H1 (cell line): ENCODE measurements at regions of chr2 and their contacts with region 1.

Region 1: DNA sequence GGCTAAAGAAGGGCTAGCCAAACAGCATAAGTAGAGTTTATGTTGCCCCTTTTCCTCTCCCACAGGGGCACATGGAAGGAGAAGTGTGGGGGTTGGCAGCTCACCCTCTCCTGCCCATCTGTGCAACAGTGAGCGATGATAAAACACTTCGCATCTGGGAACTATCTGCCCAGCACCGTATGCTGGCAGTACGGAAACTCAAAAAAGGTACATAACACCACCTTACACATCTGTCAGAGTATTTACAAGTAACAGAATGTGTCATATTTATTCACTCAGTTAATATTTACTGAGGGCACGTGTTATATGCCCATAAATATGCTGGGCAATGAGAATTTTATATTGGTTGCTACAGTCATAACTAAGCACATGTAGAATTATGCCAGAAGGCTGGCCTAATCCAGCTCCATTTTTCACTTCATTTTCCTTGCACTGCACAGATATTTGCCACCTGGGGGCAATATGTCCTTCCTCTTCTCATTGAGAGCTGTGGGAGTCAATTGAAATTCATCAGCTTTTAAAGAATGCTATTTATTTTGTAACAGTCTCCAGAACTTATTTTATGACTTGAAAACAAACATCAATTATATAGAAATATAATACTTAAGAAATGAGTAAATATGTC is 150.6 kb downstream of the RTN4 start:
- DNase-seq: no peak
- H3K4me3 ChIP-seq: no peak overlapping the region
- H3K27ac ChIP-seq: no peak overlapping the region
- H3K4me1 ChIP-seq: no peaks in the 10 kb centered on the region
- H3K27me3 ChIP-seq: no peaks in the 10 kb centered on the region
- CTCF ChIP-seq: peak in 2 of 3 experiments; percentile 34; a peak in 2 of 4 replicates
- EP300 ChIP-seq: no peak
- POLR2A ChIP-seq: no peak
- RAD21 ChIP-seq: peak; percentile 66 to 74

Region 2: DNA sequence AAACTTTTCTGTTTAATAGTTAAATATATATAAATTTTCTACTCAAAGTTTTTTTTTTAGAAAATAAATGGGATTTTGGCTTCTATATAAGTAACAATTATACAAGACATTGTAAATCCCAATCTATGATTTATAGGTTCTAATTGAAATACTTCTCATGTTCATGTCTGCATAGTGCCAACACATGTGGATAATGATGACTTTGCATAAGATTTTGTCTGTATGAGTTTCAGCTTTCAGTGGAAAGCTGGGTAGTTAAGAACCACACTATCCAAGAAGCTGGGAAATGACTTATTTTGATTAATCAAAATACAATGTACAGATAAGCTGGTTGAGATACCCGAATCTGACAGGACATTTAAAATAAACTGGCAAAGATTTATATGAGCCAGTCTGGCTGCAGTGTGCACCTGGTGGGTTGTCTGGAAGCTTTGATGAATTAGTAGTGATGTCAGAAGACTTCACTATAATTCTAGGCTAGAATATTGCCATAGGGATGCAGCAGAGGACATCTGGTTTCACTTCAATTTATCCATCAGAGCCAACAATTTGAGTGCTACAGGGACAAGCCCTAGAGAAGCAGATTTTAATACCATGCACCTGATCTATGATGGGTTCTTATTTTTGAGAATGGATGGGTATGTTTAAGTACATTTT is 130.8 kb before region 1 on chr2:
- CTCF ChIA-PET with region 1: no interaction called
- POLR2A ChIA-PET with region 1: no interaction called
- DNase-seq: no peak
- H3K4me3 ChIP-seq: no peak overlapping the region
- H3K27ac ChIP-seq: no peak overlapping the region
- H3K4me1 ChIP-seq: no peaks in the 10 kb centered on the region
- H3K27me3 ChIP-seq: no peaks in the 10 kb centered on the region
- CTCF ChIP-seq: no peak
- EP300 ChIP-seq: no peak
- POLR2A ChIP-seq: no peak
- RAD21 ChIP-seq: no peak

Region 3: GRCh38 chr2:54866868-54867267 is 32.8 kb before region 1 on chr2:
- CTCF ChIA-PET with region 1: no interaction called
- POLR2A ChIA-PET with region 1: no interaction called
- DNase-seq: no peak
- H3K4me3 ChIP-seq: no peak overlapping the region
- H3K27ac ChIP-seq: no peak overlapping the region
- H3K4me1 ChIP-seq: peaks cover 0 to 2% (median 1%) of the 10 kb centered on the region in 4 experiments; a peak in 1 of 7 replicates
- H3K27me3 ChIP-seq: no peaks in the 10 kb centered on the region
- CTCF ChIP-seq: no peak
- EP300 ChIP-seq: no peak
- POLR2A ChIP-seq: no peak
- RAD21 ChIP-seq: no peak

Region 4: GRCh38 chr2:54889053-54889452 is 10.6 kb before region 1 on chr2:
- CTCF ChIA-PET with region 1: interaction called, 19 read pairs
- POLR2A ChIA-PET with region 1: interaction called, 4 read pairs
- DNase-seq: no peak
- H3K4me3 ChIP-seq: no peak overlapping the region
- H3K27ac ChIP-seq: no peak overlapping the region
- H3K4me1 ChIP-seq: no peaks in the 10 kb centered on the region
- H3K27me3 ChIP-seq: no peaks in the 10 kb centered on the region
- CTCF ChIP-seq: no peak
- EP300 ChIP-seq: no peak
- POLR2A ChIP-seq: no peak
- RAD21 ChIP-seq: no peak

Region 5: GRCh38 chr2:55175254-55176025 is 275.8 kb after region 1 on chr2:
- CTCF ChIA-PET with region 1: interaction called, 31 read pairs
- POLR2A ChIA-PET with region 1: no interaction called
- DNase-seq: no peak
- H3K4me3 ChIP-seq: no peak overlapping the region
- H3K27ac ChIP-seq: no peak overlapping the region
- H3K4me1 ChIP-seq: peaks cover 0 to 2% (median 1%) of the 10 kb centered on the region in 4 experiments; a peak in 2 of 7 replicates
- H3K27me3 ChIP-seq: peaks cover 0 to 1% (median 0%) of the 10 kb centered on the region in 4 experiments; a peak in 1 of 7 replicates
- CTCF ChIP-seq: peak in 2 of 3 experiments; percentile 39 to 58; a peak in 2 of 4 replicates
- EP300 ChIP-seq: no peak
- POLR2A ChIP-seq: no peak
- RAD21 ChIP-seq: peak; percentile 81 to 86